GM10248 (cell line): ENCODE measurements at regions of chr10 and their contacts with region 1.

Region 1: GRCh38 chr10:62748386-62748785 is 56.1 kb upstream of the ADO start:
- DNase-seq: no peak
- CTCF ChIP-seq: no peak

Region 2: DNA sequence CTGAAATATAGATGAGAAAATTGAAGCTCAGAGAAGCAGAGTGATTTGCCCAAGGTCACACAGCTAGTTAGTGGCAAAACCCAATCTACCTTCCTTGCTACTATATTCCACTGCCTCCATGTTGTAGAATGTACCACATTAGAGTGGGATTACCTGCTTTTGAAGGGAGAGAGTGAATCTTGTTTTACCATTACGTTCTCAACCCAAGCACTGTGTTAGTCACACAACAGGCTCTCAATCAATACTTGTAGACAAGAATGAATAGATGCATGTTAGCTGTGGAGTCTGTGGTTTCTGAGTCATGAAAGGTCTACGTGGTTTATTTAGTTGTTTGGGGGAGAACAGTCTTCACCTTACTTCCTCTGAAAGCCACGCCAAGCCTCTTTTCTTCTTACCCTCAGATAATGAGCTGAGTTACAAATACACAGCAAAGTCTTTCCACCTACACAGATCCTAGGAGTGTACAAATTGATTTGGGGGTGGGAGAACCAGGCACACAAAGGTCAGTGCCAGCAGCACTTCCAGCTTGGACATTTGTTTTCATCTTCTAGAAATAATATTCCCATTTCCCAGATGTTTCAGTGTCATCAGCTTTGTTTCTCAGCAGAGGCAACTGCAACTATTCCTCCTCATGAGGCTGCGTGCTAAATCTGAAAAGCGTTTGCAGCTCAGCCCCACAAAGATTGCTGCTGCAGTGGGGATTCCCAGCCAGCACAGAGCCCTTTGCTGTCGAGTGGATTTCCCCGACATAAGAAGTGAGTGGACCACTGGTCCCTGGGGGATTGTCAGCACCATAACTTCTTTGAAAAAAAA is 15.3 kb before region 1 on chr10:
- CTCF ChIA-PET with region 1: interaction called, 16 read pairs
- POLR2A ChIA-PET with region 1: no interaction called
- DNase-seq: peak; percentile 64
- CTCF ChIP-seq: no peak

Region 3: GRCh38 chr10:62760401-62760800 is 12.0 kb after region 1 on chr10:
- CTCF ChIA-PET with region 1: interaction called, 10 read pairs
- POLR2A ChIA-PET with region 1: no interaction called
- DNase-seq: no peak
- CTCF ChIP-seq: no peak

Region 4: DNA sequence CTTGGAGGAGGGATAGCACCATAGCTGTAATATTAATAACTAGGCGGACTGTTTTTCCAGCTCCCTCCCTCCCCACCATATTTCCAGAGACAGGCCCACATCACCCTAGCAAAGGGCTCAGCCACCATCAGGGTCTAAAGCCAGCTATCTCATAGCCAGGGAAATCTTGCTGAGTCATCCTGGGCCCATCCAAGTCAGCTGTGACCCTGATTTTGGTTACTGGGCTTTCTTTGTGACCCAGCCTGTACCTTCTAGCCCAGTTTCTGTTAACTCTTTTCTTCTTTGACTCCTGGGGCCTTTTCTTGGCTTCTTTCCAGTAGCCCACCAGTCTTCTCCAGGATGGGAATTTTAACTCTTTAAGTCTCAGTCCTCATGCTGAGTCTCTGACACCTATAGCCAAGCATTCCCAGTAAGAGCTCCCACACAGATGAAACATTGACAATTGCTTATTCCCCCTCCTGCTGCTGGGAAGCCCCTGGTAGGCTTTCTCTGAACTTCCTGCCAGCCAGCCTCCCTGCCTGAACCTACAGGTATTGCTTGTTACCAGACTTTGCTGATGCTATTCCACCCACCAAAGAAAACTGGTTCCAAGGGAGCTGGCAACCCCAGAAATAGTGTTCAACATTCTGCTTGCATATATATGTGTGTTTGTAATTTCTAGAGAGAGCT is 21.3 kb after region 1 on chr10:
- CTCF ChIA-PET with region 1: interaction called, 81 read pairs
- POLR2A ChIA-PET with region 1: no interaction called
- DNase-seq: no peak
- CTCF ChIP-seq: no peak